H1 (cell line): ENCODE measurements at regions of chr5 and their contacts with region 1.

Region 1: DNA sequence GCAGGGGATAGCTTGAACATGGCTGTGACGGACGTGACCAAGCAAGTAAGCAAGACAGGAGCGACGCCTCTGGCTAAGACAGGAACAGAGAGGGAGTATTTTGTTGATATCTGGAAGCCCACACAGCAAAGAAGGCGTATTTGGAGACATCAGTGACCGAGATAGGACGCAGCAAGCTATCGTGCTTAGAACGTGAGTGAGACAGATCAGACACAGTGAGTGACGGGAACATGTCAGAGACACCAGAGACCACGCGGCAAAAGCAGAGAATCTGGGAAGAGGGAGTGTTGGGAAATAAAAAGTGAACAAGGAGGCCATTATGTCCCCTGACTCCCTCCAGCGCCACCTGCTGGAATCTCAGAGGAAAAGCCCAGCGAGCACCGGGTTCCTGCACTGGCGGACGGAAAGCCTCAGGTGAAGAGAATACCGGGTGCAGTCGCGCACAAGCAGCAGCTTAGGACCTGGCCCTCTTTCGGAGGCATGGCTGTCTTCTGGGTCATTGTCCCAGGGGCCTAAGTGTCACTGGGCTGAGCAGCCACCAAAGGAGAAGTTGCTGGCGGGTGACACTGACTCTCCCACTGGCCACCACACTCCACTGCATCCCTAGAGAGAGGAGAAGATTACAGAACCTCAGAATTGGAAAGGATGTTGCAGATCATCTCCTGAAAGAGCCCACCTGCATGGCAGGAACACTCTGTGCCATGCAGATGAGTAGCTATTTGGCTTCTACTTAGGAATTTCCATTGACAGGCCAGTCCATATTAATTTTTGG is 99.1 kb downstream of the FBXO38 start:
- DNase-seq: peak; percentile 49 to 92
- H3K4me3 ChIP-seq: no peak overlapping the region
- H3K27ac ChIP-seq: no peak overlapping the region
- H3K4me1 ChIP-seq: no peaks in the 10 kb centered on the region
- H3K27me3 ChIP-seq: no peaks in the 10 kb centered on the region; a peak in 2 of 7 replicates
- CTCF ChIP-seq: peak; percentile 83 to 91 (median 84)
- EP300 ChIP-seq: no peak
- POLR2A ChIP-seq: no peak
- RAD21 ChIP-seq: peak; percentile 55 to 73

Region 2: GRCh38 chr5:148443998-148444397 is 38.9 kb before region 1 on chr5:
- CTCF ChIA-PET with region 1: interaction called, 31 read pairs
- POLR2A ChIA-PET with region 1: no interaction called
- DNase-seq: no peak
- H3K4me3 ChIP-seq: no peak overlapping the region
- H3K27ac ChIP-seq: no peak overlapping the region
- H3K4me1 ChIP-seq: no peaks in the 10 kb centered on the region; a peak in 1 of 7 replicates
- H3K27me3 ChIP-seq: no peaks in the 10 kb centered on the region
- CTCF ChIP-seq: peak in 2 of 3 experiments; percentile 71 to 80; a peak in 3 of 4 replicates
- EP300 ChIP-seq: no peak
- POLR2A ChIP-seq: no peak
- RAD21 ChIP-seq: peak; percentile 82 to 86

Region 3: DNA sequence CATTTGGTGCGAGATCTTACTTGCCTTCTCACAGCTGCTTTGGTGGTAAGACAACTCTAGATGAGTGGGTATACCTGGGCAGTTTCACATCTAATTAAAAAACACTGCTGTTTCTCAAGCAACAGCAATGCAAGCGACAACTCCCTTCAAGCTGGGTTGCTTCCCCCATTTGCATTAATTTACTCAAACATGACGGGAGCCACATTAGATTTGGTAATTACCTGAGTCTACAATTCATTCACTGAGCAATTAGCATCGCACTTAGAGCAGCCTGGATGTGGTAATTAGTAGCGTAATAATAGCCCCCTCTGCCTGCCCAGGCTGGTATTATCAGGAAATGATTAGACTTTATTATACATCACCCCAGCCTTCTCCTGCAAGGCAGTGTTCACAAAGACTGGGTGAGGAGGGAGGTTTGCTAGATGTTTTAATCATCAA is 25.7 kb before region 1 on chr5:
- CTCF ChIA-PET with region 1: interaction called, 14 read pairs
- POLR2A ChIA-PET with region 1: no interaction called
- DNase-seq: no peak
- H3K4me3 ChIP-seq: no peak overlapping the region
- H3K27ac ChIP-seq: no peak overlapping the region
- H3K4me1 ChIP-seq: peaks cover 0 to 10% (median 8%) of the 10 kb centered on the region in 4 experiments; a peak in 4 of 7 replicates
- H3K27me3 ChIP-seq: no peaks in the 10 kb centered on the region
- CTCF ChIP-seq: peak in 2 of 3 experiments; percentile 39 to 52; a peak in 3 of 4 replicates
- EP300 ChIP-seq: no peak
- POLR2A ChIP-seq: no peak
- RAD21 ChIP-seq: peak; percentile 32 to 42; a peak in 3 of 4 replicates

Region 4: GRCh38 chr5:148469501-148469935 is 13.4 kb before region 1 on chr5:
- CTCF ChIA-PET with region 1: interaction called, 28 read pairs
- POLR2A ChIA-PET with region 1: no interaction called
- DNase-seq: no peak
- H3K4me3 ChIP-seq: no peak overlapping the region
- H3K27ac ChIP-seq: no peak overlapping the region
- H3K4me1 ChIP-seq: no peaks in the 10 kb centered on the region
- H3K27me3 ChIP-seq: no peaks in the 10 kb centered on the region
- CTCF ChIP-seq: no peak
- EP300 ChIP-seq: no peak
- POLR2A ChIP-seq: no peak
- RAD21 ChIP-seq: no peak